A673 (cell line): ENCODE measurements at regions of chr12 and their contacts with region 1.

Region 1: DNA sequence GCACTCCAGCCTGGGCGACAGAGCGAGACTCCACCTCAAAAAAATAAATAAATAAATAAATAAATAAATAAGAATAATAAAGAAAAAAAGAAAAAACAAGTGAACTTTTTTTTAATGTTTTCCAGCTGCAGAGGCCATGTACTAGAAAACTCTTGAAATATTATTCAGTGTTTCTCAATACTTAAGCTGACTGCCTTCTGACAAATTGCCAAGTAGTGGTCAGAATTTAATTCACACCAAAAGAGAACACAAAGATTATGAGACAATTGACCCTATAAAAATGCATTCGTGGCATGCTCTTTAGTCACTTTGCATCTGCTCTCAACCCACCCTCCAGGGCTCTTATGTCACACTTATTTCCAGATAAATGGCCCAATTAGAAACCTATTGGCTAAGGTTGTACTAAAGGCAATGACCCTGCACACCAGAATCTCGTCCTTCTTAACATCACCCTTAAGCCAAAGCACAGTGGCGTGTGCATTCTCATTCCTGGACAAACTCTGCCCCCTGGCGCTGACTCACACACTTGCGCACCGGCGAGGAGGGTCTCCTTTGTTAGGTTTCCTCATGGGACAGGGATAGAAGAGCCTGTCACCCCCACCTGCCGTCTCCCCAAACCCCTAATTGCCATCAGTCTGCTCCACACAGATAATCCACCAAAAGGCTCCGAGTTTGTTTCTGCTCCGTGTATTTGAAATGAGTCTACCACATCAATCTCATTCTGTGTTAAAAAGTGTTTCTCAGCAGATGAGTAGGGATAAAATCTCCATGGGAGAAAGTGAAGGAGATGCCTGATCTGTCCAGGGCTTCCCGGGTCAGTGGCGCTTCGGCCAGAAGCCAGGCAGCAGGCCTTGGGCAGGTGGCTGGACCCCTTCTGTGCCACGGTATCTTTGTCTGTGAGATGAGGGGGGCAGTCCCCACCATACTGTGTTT is 73.1 kb upstream of the CEP83 start:
- DNase-seq: peak; percentile 76
- H3K4me3 ChIP-seq: no peak overlapping the region
- H3K27ac ChIP-seq: no peak overlapping the region
- H3K4me1 ChIP-seq: no peaks in the 10 kb centered on the region
- H3K27me3 ChIP-seq: no peaks in the 10 kb centered on the region
- CTCF ChIP-seq: peak; percentile 88

Region 2: GRCh38 chr12:94133964-94134795 is 398.6 kb before region 1 on chr12:
- CTCF ChIA-PET with region 1: interaction called, 4 read pairs
- POLR2A ChIA-PET with region 1: no interaction called
- intact Hi-C with region 1: loop called (anchors 1 kb)
- DNase-seq: peak; percentile 70
- H3K4me3 ChIP-seq: no peak overlapping the region
- H3K27ac ChIP-seq: no peak overlapping the region
- H3K4me1 ChIP-seq: no peaks in the 10 kb centered on the region
- H3K27me3 ChIP-seq: peaks cover 4% of the 10 kb centered on the region
- CTCF ChIP-seq: peak; percentile 76

Region 3: GRCh38 chr12:94405413-94406116 is 127.2 kb before region 1 on chr12:
- CTCF ChIA-PET with region 1: no interaction called
- POLR2A ChIA-PET with region 1: no interaction called
- intact Hi-C with region 1: no loop called
- DNase-seq: no peak
- H3K4me3 ChIP-seq: no peak overlapping the region
- H3K27ac ChIP-seq: no peak overlapping the region
- H3K4me1 ChIP-seq: no peaks in the 10 kb centered on the region
- H3K27me3 ChIP-seq: no peaks in the 10 kb centered on the region
- CTCF ChIP-seq: no peak

Region 4: DNA sequence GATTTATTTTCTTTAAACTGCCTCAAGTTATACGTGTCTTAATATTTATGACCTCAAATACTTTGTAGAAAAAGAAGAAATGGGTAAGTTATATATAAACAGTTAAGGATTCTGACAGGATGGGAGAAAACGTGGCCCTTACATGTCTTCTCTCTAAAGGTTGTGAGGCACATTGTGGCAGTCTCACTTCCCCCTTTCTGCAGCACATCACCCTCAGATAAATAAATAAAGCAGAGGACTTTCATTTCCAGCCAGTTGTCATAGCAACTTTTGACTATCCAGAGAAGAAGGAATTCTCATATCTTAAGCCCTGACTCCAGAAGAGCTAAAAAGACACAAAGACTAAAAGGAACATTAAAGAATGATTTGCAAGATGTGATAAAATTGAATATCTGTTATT is 44.3 kb before region 1 on chr12:
- CTCF ChIA-PET with region 1: no interaction called
- POLR2A ChIA-PET with region 1: no interaction called
- intact Hi-C with region 1: no loop called
- DNase-seq: no peak
- H3K4me3 ChIP-seq: no peak overlapping the region
- H3K27ac ChIP-seq: no peak overlapping the region
- H3K4me1 ChIP-seq: no peaks in the 10 kb centered on the region
- H3K27me3 ChIP-seq: no peaks in the 10 kb centered on the region
- CTCF ChIP-seq: no peak